ENCODE measurements at regions of chr17 and their contacts with region 1.

Region 1: GRCh38 chr17:76271669-76272540 is 6.8 kb downstream of the UBALD2 start:
- DNase-seq: peak; percentile 92
- H3K4me3 Mint-ChIP-seq: peak overlapping the region; percentile 83
- H3K27ac Mint-ChIP-seq: peak overlapping the region; percentile 96
- H3K4me1 Mint-ChIP-seq: peaks cover 51% of the 10 kb centered on the region
- H3K27me3 Mint-ChIP-seq: no peaks in the 10 kb centered on the region

Region 2: DNA sequence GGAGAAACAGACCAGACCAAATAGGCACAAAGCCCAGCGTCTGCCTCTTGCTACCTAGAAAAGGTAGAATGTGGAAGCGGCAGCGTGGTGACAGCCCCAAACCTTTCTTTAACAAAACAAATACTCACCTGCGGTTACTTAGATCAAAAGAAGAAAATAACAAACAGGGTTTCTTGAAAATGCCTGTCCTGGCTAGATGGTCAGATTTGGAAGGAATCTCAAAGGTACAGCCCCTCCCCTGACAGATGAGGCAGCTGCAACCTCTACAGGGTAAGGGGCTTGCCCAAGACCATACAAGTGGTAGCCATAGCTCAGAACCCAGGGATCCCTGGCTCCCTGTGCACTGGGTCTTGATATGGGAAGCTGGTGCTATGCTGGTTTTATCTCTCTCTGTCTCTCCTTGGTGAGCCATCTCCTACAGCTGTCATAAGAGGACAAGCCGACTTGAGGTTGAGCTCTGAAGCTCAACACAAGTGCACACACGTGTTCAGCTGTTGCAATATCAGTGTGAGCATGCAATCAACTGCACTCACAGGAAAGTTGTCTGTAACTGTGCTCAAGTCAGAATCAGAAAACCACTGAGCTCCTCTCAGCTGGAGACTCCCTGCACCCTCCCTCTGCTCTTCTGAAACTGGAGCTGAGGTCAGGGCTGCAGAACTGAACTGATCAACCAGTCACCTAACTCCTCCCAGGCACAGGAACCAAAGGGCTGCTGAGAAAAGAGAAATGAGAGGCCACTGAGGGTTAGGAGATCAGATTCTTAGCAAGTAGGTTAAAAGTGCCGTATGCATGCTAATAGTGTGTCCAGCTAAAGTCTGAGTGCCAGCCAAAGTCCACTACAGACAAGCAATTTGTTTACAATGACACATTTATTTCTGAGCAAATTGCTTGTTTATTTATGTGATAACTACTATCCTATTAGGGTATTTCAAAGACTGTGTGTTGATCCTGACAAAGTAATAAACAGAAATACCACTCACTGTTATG is 25.5 kb before region 1 on chr17:
- intact Hi-C with region 1: loop called (anchors 2 kb)
- DNase-seq: peak; percentile 94
- H3K4me3 Mint-ChIP-seq: peak overlapping the region; percentile 75
- H3K27ac Mint-ChIP-seq: peak overlapping the region; percentile 83
- H3K4me1 Mint-ChIP-seq: peaks cover 69% of the 10 kb centered on the region
- H3K27me3 Mint-ChIP-seq: no peaks in the 10 kb centered on the region

Region 3: GRCh38 chr17:76384222-76384986 is 112.5 kb after region 1 on chr17 and contains the start of gene SPHK1:
- intact Hi-C with region 1: no loop called
- DNase-seq: peak; percentile 95
- H3K4me3 Mint-ChIP-seq: peak within 1 kb of the TSS; percentile 92
- H3K27ac Mint-ChIP-seq: peak within 1 kb of the TSS; percentile 96
- H3K4me1 Mint-ChIP-seq: peaks cover 10% of the 10 kb centered on the region
- H3K27me3 Mint-ChIP-seq: no peaks in the 10 kb centered on the region
- total RNA-seq, gene SPHK1: 26.8 and 27.6 TPM in 2 replicates